ENCODE measurements at regions of chr14 and their contacts with region 1.

Region 1: DNA sequence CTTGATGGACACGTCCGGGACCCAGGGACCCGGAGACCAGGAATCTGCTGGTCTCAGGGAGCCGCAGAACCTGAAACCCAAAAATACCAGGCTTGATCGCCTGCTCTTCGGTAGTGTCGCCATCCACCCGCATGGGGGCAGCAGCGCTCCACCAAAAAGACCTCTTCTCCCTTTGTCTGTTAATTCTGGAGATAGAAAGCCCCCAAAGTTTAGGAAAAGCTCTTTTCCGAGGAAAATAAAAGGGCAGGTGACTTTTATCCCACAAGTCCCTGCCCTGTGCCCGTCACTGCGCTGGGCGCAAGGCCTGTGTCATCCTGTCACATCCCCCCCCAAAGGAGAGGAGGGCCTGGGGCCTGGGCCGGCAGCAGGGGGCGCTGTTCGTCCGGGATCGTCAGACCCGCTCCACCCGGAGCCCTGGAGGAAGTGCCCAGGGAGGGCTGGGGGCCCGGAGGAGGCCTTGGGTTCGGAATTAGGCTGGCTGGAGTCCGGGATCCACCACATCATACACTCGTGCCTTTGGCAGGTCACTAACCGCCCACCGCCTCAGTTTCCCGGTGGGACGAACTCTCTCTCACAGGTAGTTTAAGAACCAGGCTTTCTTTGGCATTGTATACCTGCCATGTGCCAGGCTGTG is 31.9 kb downstream of the DAD1 start:
- DNase-seq: peak; percentile 84 to 97 (median 93)
- ATAC-seq: peak; percentile 48
- H3K4me3 ChIP-seq: peak overlapping the region; percentile 65
- H3K4me3 Mint-ChIP-seq: peak overlapping the region; percentile 67 to 95 (median 88)
- H3K27ac ChIP-seq: peak overlapping the region; percentile 96
- H3K27ac Mint-ChIP-seq: peak overlapping the region; percentile 94 to 99 (median 99)
- H3K4me1 ChIP-seq: peaks cover 87 to 90% of the 10 kb centered on the region in 2 donors
- H3K4me1 Mint-ChIP-seq: peaks cover 62 to 95% (median 92%) of the 10 kb centered on the region in 7 donors
- H3K27me3 ChIP-seq: no peaks in the 10 kb centered on the region
- H3K27me3 Mint-ChIP-seq: peaks cover 0 to 4% (median 0%) of the 10 kb centered on the region in 5 donors

Region 2: GRCh38 chr14:21734457-21735074 is 822.5 kb before region 1 on chr14:
- CTCF ChIA-PET with region 1: interaction called, 3 read pairs
- POLR2A ChIA-PET with region 1: interaction called, 9 read pairs
- intact Hi-C with region 1: loop called in 1 of 2 experiments (anchors 5 kb)
- DNase-seq: peak in 7 of 9 donors; percentile 44 to 71 (median 58)
- ATAC-seq: peak; percentile 73
- H3K4me3 ChIP-seq: no peak overlapping the region
- H3K4me3 Mint-ChIP-seq: peak overlapping the region in 9 of 10 donors; percentile 20 to 82 (median 58)
- H3K27ac ChIP-seq: no peak overlapping the region
- H3K27ac Mint-ChIP-seq: peak overlapping the region in 5 of 9 donors; percentile 6 to 85 (median 50)
- H3K4me1 ChIP-seq: no peaks in the 10 kb centered on the region
- H3K4me1 Mint-ChIP-seq: peaks cover 6 to 20% (median 14%) of the 10 kb centered on the region in 7 donors
- H3K27me3 ChIP-seq: no peaks in the 10 kb centered on the region
- H3K27me3 Mint-ChIP-seq: peaks cover 28 to 47% (median 42%) of the 10 kb centered on the region in 5 donors

Region 3: DNA sequence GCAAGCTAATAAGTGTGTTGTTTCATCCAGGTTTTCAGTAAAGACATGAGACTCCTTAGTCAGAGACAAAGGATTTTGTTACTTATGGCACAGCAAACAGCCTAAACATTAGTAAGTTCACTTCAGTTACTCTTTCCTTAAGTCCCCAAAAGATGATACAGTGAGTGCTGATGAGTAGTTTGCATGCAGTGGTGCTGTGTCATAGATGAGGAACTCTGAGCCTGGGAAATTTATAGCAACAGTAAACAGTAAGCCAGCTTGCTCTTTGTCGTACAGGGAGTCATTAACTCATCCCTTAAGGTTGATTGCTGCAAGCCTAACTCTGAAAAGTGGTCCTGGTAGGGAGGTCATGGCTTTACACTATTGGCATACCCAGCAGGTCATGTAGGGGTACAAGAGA is 674.9 kb before region 1 on chr14:
- CTCF ChIA-PET with region 1: interaction called, 4 read pairs
- POLR2A ChIA-PET with region 1: interaction called, 3 read pairs
- intact Hi-C with region 1: loop called in 1 of 2 experiments (anchors 1 kb)
- DNase-seq: no peak
- ATAC-seq: no peak
- H3K4me3 ChIP-seq: no peak overlapping the region
- H3K4me3 Mint-ChIP-seq: no peak overlapping the region
- H3K27ac ChIP-seq: no peak overlapping the region
- H3K27ac Mint-ChIP-seq: no peak overlapping the region
- H3K4me1 ChIP-seq: peaks cover 0 to 2% of the 10 kb centered on the region in 2 donors
- H3K4me1 Mint-ChIP-seq: peaks cover 0 to 17% (median 10%) of the 10 kb centered on the region in 7 donors
- H3K27me3 ChIP-seq: no peaks in the 10 kb centered on the region
- H3K27me3 Mint-ChIP-seq: peaks cover 0 to 45% (median 0%) of the 10 kb centered on the region in 5 donors

Region 4: GRCh38 chr14:22112004-22112403 is 445.1 kb before region 1 on chr14:
- CTCF ChIA-PET with region 1: interaction called, 4 read pairs
- POLR2A ChIA-PET with region 1: no interaction called
- intact Hi-C with region 1: loop called in 1 of 2 experiments (anchors 2 kb)
- DNase-seq: peak in 6 of 9 donors; percentile 28 to 41 (median 36)
- ATAC-seq: peak; percentile 50
- H3K4me3 ChIP-seq: peak overlapping the region; percentile 27
- H3K4me3 Mint-ChIP-seq: peak overlapping the region; percentile 67 to 87 (median 79)
- H3K27ac ChIP-seq: no peak overlapping the region
- H3K27ac Mint-ChIP-seq: peak overlapping the region; percentile 65 to 89 (median 83)
- H3K4me1 ChIP-seq: no peaks in the 10 kb centered on the region
- H3K4me1 Mint-ChIP-seq: peaks cover 0 to 39% (median 10%) of the 10 kb centered on the region in 7 donors
- H3K27me3 ChIP-seq: no peaks in the 10 kb centered on the region
- H3K27me3 Mint-ChIP-seq: peaks cover 0 to 1% (median 0%) of the 10 kb centered on the region in 5 donors

Region 5: DNA sequence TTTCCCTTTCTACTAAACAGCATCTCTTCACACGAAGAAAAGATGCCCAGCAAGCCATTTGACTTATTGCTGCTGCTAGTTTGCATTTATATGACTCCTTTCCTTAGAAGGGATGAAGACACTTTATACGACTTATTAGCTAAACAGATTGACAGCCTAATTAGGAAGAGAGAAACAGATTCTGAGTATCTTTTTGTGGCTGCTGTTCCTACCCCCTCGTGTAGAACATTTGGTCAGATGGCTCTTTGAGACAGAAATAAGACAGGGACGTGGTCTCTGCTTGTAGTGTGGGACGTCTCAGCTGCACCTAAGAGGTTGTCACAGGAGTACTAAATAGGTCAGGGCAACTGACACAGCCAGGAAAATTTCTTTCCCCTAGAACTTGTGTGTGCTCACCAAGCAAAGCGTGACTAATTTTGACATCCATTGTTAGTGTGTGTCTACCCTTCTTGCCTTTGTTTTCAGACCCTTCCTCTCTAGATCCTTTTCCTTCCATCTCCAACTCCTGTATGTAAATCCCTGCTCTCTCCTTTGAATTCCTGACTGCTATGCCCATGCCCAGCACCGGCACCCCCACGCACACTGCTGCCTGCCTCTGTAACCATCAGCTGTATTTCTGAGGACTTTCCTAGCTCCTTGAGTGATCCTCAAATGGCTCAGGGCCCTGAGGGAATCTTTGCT is 51.3 kb before region 1 on chr14:
- CTCF ChIA-PET with region 1: interaction called, 12 read pairs
- POLR2A ChIA-PET with region 1: interaction called, 709 read pairs
- intact Hi-C with region 1: no loop called
- DNase-seq: no peak
- ATAC-seq: peak; percentile 39
- H3K4me3 ChIP-seq: peak overlapping the region; percentile 51
- H3K4me3 Mint-ChIP-seq: peak overlapping the region; percentile 79 to 95 (median 87)
- H3K27ac ChIP-seq: peak overlapping the region; percentile 90
- H3K27ac Mint-ChIP-seq: peak overlapping the region; percentile 92 to 99 (median 96)
- H3K4me1 ChIP-seq: peaks cover 30 to 40% of the 10 kb centered on the region in 2 donors
- H3K4me1 Mint-ChIP-seq: peaks cover 19 to 82% (median 64%) of the 10 kb centered on the region in 7 donors
- H3K27me3 ChIP-seq: no peaks in the 10 kb centered on the region
- H3K27me3 Mint-ChIP-seq: no peaks in the 10 kb centered on the region

Region 6: DNA sequence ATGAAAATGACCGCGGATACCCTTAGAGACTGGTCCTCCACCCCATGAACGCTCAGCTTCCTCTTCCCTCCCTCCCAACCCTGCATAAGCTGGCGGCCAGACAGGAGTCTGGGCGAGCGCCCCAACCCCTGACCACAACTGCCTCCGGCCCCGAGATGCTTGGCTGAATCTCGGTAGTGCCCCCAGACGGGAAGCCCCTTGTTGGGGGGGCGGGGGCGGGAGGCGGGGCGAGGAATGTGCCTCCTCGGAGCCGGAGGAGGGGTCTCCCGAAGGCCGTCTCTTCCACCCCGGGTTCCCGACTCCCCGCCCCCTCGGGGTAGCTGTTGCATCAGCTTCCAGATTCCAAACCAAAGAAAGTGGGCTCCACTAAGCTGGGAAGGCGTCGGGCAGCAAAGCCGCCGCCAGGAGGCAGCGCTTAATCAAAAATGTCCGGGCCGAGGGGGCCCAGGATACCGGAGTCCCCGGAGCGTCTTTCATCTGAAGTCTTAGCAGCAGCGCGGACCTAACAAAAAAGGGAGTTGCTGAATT is 265.5 kb after region 1 on chr14:
- CTCF ChIA-PET with region 1: interaction called, 5 read pairs
- POLR2A ChIA-PET with region 1: interaction called, 5 read pairs
- intact Hi-C with region 1: loop called in 1 of 2 experiments (anchors 2 kb)
- DNase-seq: peak; percentile 50 to 71 (median 65)
- ATAC-seq: peak; percentile 83
- H3K4me3 ChIP-seq: peak overlapping the region; percentile 38
- H3K4me3 Mint-ChIP-seq: peak overlapping the region; percentile 47 to 78 (median 66)
- H3K27ac ChIP-seq: no peak overlapping the region
- H3K27ac Mint-ChIP-seq: peak overlapping the region in 3 of 9 donors; percentile 11 to 36 (median 22)
- H3K4me1 ChIP-seq: peaks cover 0 to 17% of the 10 kb centered on the region in 2 donors
- H3K4me1 Mint-ChIP-seq: peaks cover 6 to 37% (median 24%) of the 10 kb centered on the region in 7 donors
- H3K27me3 ChIP-seq: no peaks in the 10 kb centered on the region
- H3K27me3 Mint-ChIP-seq: peaks cover 0 to 16% (median 4%) of the 10 kb centered on the region in 5 donors